Activated T-helper 2 cell treated with anti-CD3 and anti-CD28 coated beads, Interferon-gamma antibody, Interleukin-2, Interleukin-4, amounts not matched to agents 10 μg/mL and 5 μg/mL and 100 μg/mL, durations not matched to agents 14 hours and 24 hours and 36 hours (primary cell): ENCODE measurements at regions of chr7 and their contacts with region 1.

Region 1: GRCh38 chr7:150322833-150323681 is at the starts of genes ACTR3C and LRRC61:
- DNase-seq: peak; percentile 57
- H3K4me3 Mint-ChIP-seq: peak within 1 kb of the TSS; percentile 97
- H3K27ac Mint-ChIP-seq: peak within 1 kb of the TSS; percentile 99
- H3K4me1 Mint-ChIP-seq: peaks cover 47% of the 10 kb centered on the region
- H3K27me3 Mint-ChIP-seq: no peaks in the 10 kb centered on the region
- total RNA-seq, gene ACTR3C: 7.0 and 7.9 TPM in 2 replicates
- total RNA-seq, gene LRRC61: 22.7 and 25.8 TPM in 2 replicates

Region 2: GRCh38 chr7:149838224-149838947 is 484.7 kb before region 1 on chr7 and contains the start of gene ZNF862:
- intact Hi-C with region 1: loop called (anchors 1 kb)
- DNase-seq: peak; percentile 95
- H3K4me3 Mint-ChIP-seq: peak within 1 kb of the TSS; percentile 88
- H3K27ac Mint-ChIP-seq: peak within 1 kb of the TSS; percentile 56
- H3K4me1 Mint-ChIP-seq: peaks cover 21% of the 10 kb centered on the region
- H3K27me3 Mint-ChIP-seq: peaks cover 11% of the 10 kb centered on the region
- total RNA-seq, gene ZNF862: 14.6 and 16.4 TPM in 2 replicates

Region 3: DNA sequence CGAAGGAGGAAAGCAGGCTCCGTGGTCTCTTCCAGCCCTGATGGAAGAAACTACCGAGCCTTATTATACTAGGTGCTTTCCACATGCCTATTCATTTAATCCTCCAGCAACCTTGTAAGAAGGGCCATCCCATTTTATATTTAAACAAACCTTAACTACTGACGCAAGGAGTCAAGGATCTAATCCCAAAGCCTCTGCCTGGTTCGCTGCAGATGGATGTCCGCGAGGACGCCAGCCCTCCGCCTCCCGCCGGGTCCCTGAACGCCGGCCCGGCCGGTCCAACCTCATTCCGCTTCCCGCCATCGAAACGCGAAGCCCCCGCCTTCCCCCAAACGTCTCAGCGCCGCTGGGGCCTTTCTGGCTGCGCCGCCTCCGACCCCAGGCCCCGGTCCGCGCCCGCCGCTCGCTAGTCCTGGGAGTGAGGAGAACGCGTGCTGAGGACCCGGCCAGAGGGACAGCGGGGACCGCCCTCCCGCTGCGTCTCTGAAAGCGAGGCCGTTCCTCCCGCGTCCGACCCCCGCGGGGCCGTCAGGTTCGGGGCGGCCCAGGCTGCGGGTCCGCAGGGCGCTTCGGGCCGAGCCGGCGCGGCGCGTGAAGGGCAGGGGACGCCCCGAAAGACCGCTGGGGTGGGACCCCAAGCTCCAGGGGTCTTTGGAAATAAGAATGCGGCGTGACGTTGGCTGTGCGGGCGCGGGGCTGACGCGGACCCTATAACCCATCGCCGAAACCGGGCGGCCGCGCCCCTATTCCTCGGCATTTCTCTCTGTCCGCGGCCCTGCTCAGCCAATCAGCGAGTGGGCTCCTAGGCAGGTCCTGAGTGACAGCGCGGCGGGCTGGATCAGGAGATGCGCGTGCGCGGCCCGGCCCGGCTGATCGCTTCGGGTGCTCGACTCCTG is 449.7 kb before region 1 on chr7 and contains the start of gene ATP6V0E2:
- intact Hi-C with region 1: loop called (anchors 1 kb)
- DNase-seq: peak; percentile 91
- H3K4me3 Mint-ChIP-seq: peak within 1 kb of the TSS; percentile 89
- H3K27ac Mint-ChIP-seq: peak within 1 kb of the TSS; percentile 90
- H3K4me1 Mint-ChIP-seq: peaks cover 57% of the 10 kb centered on the region
- H3K27me3 Mint-ChIP-seq: no peaks in the 10 kb centered on the region
- total RNA-seq, gene ATP6V0E2: 50.2 and 54.3 TPM in 2 replicates

Region 4: DNA sequence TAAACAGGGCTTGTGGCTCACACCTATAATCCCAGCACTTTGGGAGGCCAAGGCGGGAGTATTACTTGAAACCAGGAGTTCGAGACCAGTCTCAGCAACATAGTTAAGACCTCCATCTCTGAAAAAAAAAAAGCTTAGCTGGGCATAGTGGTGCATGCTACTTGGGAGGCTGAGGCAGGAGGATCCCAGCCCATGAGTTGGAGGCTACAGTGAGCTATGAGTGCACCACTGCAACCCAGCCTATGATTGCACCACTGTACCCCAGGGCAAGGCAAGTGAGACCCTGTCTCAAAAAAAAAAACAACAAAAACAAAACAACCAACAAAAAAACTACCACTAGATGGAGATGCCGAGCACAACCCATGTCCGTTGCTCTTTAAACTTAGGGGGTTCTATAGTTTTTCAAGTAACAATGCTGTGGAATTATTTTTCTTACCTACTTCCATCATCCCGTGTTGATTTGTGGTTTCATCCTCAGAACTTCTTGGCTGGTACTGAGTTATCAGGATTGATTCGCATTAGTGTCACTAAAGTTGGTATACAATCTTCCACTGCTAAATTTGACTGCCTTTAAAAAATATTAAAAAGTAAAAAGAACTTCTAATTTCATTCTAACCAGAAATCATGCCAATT is 33.3 kb after region 1 on chr7:
- intact Hi-C with region 1: loop called (anchors 5 kb)
- DNase-seq: no peak
- H3K4me3 Mint-ChIP-seq: no peak overlapping the region
- H3K27ac Mint-ChIP-seq: no peak overlapping the region
- H3K4me1 Mint-ChIP-seq: peaks cover 33% of the 10 kb centered on the region
- H3K27me3 Mint-ChIP-seq: peaks cover 11% of the 10 kb centered on the region

Region 5: DNA sequence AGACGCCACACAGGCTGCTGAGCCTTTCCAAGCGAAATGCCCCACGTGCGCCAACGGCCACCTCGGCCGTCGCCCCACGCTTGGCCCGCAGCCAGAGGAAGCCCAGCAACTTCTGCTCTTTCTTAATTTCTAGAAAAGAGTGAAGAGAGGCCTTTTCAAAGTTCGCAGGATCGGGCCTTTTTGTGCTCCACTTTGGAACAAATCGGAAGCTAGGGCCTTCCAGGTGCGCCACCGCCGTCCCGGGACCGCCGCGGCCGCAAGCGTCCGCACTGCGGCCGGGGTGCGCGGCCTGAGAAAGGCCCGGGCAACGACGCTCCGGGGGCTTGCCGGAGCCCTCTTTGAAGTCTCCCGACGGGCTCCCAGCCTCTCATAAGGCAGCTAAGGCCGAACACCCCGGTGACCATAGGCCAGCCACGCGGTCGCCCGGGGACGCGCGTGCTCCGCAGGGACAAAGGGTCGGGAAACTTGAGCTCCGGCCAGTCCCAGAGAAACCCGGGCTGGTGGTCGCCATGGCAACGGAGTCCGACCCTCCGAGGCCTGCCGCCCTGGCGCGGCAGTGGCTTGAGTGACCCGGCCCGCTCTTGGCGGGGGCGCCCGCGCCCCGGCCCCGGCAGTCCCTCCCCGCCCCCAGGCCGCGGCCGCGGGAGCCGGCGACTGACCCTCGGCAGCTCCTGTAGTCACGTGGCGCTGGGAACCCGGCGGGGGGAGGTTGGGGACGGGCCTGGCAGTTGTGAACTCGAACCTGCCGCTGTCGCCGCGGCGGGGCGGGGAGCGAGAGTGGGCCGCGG is 45.2 kb after region 1 on chr7 and contains the start of gene REPIN1:
- intact Hi-C with region 1: loop called (anchors 2 kb)
- DNase-seq: peak; percentile 75
- H3K4me3 Mint-ChIP-seq: peak within 1 kb of the TSS; percentile 94
- H3K27ac Mint-ChIP-seq: peak within 1 kb of the TSS; percentile 94
- H3K4me1 Mint-ChIP-seq: peaks cover 36% of the 10 kb centered on the region
- H3K27me3 Mint-ChIP-seq: no peaks in the 10 kb centered on the region
- total RNA-seq, gene REPIN1: 81.5 and 82.2 TPM in 2 replicates

Region 6: DNA sequence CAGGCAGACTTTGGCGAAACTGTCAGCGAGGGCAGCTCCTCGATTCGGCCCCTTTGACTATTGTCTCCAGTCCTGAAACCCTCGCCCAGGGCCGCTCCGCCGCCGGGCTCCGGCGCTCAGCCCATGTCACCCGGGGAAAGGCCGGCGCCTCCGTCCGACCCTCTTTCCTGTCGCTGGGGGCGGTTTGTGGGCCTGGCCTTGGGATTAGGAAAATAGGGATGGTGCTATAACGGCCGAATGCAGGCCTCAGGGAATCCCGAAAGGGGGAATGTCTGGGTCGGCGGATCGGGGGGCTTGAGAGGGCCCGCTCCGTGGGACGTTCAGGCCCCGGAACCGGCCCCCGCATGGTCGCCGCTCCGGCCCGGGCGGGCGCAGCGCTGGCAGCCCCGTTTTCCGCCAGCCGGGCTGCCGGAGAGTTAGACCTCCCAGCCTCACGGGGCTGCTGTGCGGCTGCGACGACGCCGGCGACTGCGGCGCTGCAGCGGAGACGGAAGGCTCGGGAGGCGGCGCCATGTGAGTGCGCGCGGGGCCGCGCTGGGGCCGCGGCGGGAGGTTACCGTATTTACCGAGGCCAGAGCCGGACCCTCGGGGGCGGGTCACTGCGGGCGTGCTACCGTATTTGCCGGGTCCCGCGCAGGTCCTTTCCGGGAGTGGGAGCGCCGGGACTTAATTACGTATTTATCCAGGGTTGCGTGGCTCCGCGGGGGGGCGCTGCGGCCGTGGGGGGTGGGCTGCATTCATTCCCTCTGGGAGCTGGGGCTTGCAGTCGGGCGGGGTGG is 81.9 kb after region 1 on chr7:
- intact Hi-C with region 1: loop called (anchors 2 kb)
- DNase-seq: peak; percentile 78
- H3K4me3 Mint-ChIP-seq: peak overlapping the region; percentile 88
- H3K27ac Mint-ChIP-seq: peak overlapping the region; percentile 95
- H3K4me1 Mint-ChIP-seq: peaks cover 58% of the 10 kb centered on the region
- H3K27me3 Mint-ChIP-seq: no peaks in the 10 kb centered on the region

Region 7: GRCh38 chr7:150514748-150515222 is 191.7 kb after region 1 on chr7 and contains the start of gene GIMAP7:
- intact Hi-C with region 1: loop called (anchors 5 kb)
- DNase-seq: peak; percentile 63
- H3K4me3 Mint-ChIP-seq: peak within 1 kb of the TSS; percentile 89
- H3K27ac Mint-ChIP-seq: peak within 1 kb of the TSS; percentile 89
- H3K4me1 Mint-ChIP-seq: peaks cover 45% of the 10 kb centered on the region
- H3K27me3 Mint-ChIP-seq: no peaks in the 10 kb centered on the region
- total RNA-seq, gene GIMAP7: 22.6 and 24.1 TPM in 2 replicates